Activated naive CD4-positive, alpha-beta T cell treated with anti-CD3 and anti-CD28 coated beads for 36 hours (primary cell): ENCODE measurements at regions of chr1 and their contacts with region 1.

Region 1: GRCh38 chr1:67760030-67760821 is 73.0 kb downstream of the GNG12 start:
- DNase-seq: peak; percentile 76
- H3K4me3 Mint-ChIP-seq: no peak overlapping the region
- H3K27ac Mint-ChIP-seq: no peak overlapping the region
- H3K4me1 Mint-ChIP-seq: no peaks in the 10 kb centered on the region
- H3K27me3 Mint-ChIP-seq: peaks cover 19% of the 10 kb centered on the region

Region 2: DNA sequence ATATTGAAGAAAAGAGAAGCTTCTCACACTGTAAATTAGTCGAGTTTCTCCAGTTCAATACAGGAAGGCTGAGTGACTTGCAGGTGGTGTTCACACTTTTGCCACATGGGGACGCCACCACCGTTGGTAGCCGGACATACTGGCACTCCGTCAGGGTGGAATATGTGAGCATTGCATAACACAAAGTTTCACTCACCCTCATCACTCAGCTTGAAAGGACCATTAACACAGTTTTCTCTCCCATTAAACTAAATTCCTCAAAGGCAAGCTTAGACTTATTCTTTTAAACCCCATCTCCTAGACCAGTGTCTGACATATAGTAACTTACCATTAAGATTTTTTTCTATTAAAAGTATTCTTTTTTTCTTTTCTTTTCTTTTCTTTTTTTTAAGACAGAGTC is 224.8 kb before region 1 on chr1:
- CTCF ChIA-PET with region 1: interaction called, 82 read pairs
- intact Hi-C with region 1: loop called (anchors 1 kb)
- DNase-seq: peak; percentile 81
- H3K4me3 Mint-ChIP-seq: no peak overlapping the region
- H3K27ac Mint-ChIP-seq: no peak overlapping the region
- H3K4me1 Mint-ChIP-seq: no peaks in the 10 kb centered on the region
- H3K27me3 Mint-ChIP-seq: peaks cover 4% of the 10 kb centered on the region

Region 3: DNA sequence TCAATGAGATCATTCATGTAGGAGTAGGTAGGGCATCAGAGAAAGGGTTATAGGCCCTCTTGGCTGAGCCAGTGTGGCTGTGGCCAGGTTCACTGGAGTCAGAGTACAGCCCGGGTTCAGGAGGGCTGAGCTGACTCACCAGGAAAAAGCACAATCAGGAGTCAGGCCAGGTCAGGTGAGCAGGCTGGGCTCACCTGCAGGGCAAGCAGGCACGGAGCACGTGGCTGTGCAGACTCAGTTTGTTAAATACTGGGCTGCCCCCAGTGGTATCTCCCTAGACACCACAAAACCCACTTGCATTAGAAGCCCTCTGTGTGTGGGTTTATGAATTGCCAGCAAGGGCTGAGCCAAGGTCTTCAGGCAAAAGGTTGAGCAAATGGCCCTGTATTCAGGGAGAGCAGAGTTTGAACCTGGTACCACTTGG is 207.9 kb before region 1 on chr1:
- CTCF ChIA-PET with region 1: interaction called, 49 read pairs
- intact Hi-C with region 1: no loop called
- DNase-seq: no peak
- H3K4me3 Mint-ChIP-seq: no peak overlapping the region
- H3K27ac Mint-ChIP-seq: no peak overlapping the region
- H3K4me1 Mint-ChIP-seq: no peaks in the 10 kb centered on the region
- H3K27me3 Mint-ChIP-seq: peaks cover 8% of the 10 kb centered on the region

Region 4: GRCh38 chr1:67570473-67571143 is 189.6 kb before region 1 on chr1:
- CTCF ChIA-PET with region 1: interaction called, 15 read pairs
- intact Hi-C with region 1: no loop called
- DNase-seq: no peak
- H3K4me3 Mint-ChIP-seq: no peak overlapping the region
- H3K27ac Mint-ChIP-seq: no peak overlapping the region
- H3K4me1 Mint-ChIP-seq: no peaks in the 10 kb centered on the region
- H3K27me3 Mint-ChIP-seq: no peaks in the 10 kb centered on the region

Region 5: GRCh38 chr1:67735806-67736627 is 24.2 kb before region 1 on chr1:
- CTCF ChIA-PET with region 1: interaction called, 20 read pairs
- intact Hi-C with region 1: no loop called
- DNase-seq: peak; percentile 73
- H3K4me3 Mint-ChIP-seq: peak overlapping the region; percentile 53
- H3K27ac Mint-ChIP-seq: peak overlapping the region; percentile 74
- H3K4me1 Mint-ChIP-seq: peaks cover 16% of the 10 kb centered on the region
- H3K27me3 Mint-ChIP-seq: peaks cover 4% of the 10 kb centered on the region

Region 6: GRCh38 chr1:67957066-67957465 is 196.8 kb after region 1 on chr1:
- CTCF ChIA-PET with region 1: no interaction called
- intact Hi-C with region 1: no loop called
- DNase-seq: no peak
- H3K4me3 Mint-ChIP-seq: no peak overlapping the region
- H3K27ac Mint-ChIP-seq: no peak overlapping the region
- H3K4me1 Mint-ChIP-seq: no peaks in the 10 kb centered on the region
- H3K27me3 Mint-ChIP-seq: peaks cover 7% of the 10 kb centered on the region